ENCODE measurements at regions of chr16 and their contacts with region 1.

Region 1: DNA sequence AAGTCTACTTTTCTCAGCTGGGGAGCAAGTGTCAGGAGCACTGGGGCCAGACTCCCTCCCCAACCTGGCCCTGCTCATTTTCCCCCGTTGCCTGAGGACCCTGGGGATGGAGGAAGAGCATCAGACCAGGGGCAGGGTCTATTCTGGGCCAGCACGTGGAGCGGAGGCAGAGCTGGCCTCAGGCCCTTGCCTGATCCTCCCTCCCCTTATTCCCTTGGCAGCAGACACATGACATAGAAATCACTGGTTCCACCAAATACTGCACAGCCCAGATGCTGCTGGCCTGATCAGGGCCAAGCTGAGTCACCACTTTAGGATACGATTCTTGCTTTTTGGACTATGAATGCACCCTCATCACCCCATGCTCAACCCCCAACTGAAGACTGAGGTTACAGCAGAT is 15.8 kb upstream of the AGRP start:
- DNase-seq: no peak
- ATAC-seq: no peak

Region 2: GRCh38 chr16:67514382-67514828 is 15.3 kb after region 1 on chr16:
- intact Hi-C with region 1: loop called in 1 of 2 experiments (anchors 2 kb)
- DNase-seq: peak; percentile 74 to 92
- ATAC-seq: peak; percentile 72